ENCODE measurements at regions of chr10 and their contacts with region 1.

Region 1: DNA sequence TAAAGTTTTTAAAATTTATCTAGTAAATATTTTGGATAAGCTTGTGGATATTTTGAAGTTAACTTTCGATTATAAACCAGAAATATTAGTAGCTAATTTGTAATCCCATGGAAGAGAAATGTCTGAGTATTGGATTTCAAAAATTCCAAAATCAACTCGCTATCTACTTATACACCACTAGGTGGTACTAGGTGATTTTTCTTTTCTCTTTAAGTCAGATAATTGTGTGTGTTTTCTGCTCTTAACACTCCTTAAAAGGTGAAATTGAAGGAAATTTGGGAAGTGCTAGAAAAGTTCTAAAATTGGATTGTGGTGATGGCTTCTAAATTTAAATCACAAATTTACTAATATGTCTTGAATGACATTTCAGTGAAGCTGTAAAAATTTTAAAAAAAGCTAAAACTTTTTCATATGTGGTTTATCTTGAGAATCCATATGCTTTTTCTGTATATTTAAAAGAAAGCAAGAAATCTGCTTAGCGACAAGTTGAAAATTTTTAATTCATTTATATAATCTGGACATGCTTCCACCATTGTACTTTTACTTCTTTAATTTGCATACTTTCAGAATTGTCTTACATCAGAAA is 90.2 kb downstream of the IPMK start:
- DNase-seq: no peak
- H3K4me3 Mint-ChIP-seq: no peak overlapping the region
- H3K27ac Mint-ChIP-seq: no peak overlapping the region
- H3K4me1 Mint-ChIP-seq: no peaks in the 10 kb centered on the region
- H3K27me3 Mint-ChIP-seq: peaks cover 1% of the 10 kb centered on the region

Region 2: DNA sequence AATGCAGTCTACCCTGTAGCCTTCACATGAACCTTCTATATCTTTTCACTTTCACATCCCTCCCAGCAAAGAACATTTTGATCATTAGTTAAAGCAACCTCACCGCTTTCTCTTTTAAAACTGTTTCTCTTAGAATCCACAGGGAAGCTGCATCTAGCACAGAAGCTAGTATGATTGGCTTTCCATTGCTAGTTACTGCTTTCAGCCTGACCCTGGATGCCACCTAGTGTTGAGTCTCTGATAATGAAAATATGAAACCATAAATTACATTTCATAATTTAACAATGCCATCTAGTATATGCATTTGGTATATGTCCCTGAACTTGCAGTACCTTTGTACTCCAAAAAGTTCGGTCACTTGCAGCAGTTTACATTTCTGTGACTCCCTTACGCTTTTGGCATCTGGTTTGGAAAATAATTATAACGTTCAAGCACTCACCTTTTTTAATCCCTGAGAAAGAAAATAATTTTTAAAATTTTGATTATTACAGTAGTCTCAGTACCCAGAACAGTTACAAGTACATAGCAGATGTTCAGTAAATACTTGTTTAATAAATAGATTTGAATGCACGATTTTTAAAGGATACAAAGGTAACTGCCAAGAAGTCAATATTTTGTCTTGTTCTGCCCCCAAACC is 114.2 kb after region 1 on chr10:
- CTCF ChIA-PET with region 1: interaction called, 81 read pairs
- POLR2A ChIA-PET with region 1: no interaction called
- DNase-seq: peak; percentile 33
- H3K4me3 Mint-ChIP-seq: no peak overlapping the region
- H3K27ac Mint-ChIP-seq: no peak overlapping the region
- H3K4me1 Mint-ChIP-seq: no peaks in the 10 kb centered on the region
- H3K27me3 Mint-ChIP-seq: no peaks in the 10 kb centered on the region